IMR-90 (cell line): ENCODE measurements at regions of chr1 and their contacts with region 1.

Region 1: DNA sequence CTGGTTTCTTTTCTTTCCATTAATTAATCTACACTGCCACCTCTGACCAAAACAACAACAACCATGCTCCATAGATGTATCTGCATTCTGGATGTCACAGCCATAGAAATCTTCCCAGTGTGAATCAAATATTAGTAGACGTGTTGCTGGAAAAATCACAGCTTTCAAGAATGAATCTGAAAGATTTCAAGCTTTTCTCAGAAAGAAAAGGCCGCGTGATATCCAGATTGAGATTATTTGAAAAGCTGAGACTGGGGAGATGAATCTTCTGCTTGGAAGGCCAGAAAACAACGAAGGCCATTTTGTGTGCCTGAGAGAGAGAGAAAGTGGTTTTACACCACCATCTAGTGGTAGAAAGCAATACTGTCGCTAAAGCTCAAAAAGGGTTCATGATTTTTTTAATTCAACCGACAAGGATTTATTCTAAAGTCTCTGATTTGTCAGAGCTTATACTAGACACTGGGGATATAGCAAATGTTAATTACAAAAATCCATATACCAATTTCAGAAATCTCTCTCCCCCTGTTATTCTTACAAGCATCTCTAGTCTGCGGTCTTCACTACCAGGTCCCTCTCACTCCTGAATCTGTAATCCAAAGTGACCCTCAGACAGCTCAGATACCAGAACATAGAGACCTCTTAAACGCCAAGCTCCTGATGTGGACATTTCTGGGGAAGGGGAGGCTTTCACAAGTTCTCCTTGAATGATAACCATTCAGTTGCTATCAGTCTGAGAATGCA is 87.5 kb upstream of the SGIP1 start:
- DNase-seq: peak; percentile 76
- ATAC-seq: peak; percentile 73
- H3K4me3 ChIP-seq: no peak overlapping the region
- H3K27ac ChIP-seq: no peak overlapping the region
- H3K4me1 ChIP-seq: peaks cover 7% of the 10 kb centered on the region
- H3K27me3 ChIP-seq: no peaks in the 10 kb centered on the region
- CTCF ChIP-seq: peak; percentile 98
- POLR2A ChIP-seq: peak; percentile 59
- RAD21 ChIP-seq: peak; percentile 98

Region 2: GRCh38 chr1:65419681-65420589 is 1026.5 kb before region 1 on chr1:
- CTCF ChIA-PET with region 1: no interaction called
- POLR2A ChIA-PET with region 1: no interaction called
- dilution Hi-C with region 1: no loop called
- in situ Hi-C with region 1: loop called (anchors 10 kb)
- intact Hi-C with region 1: no loop called
- DNase-seq: peak; percentile 97
- ATAC-seq: peak; percentile 95
- H3K4me3 ChIP-seq: peak overlapping the region; percentile 67
- H3K27ac ChIP-seq: peak overlapping the region; percentile 78
- H3K4me1 ChIP-seq: peaks cover 12% of the 10 kb centered on the region
- H3K27me3 ChIP-seq: no peaks in the 10 kb centered on the region
- CTCF ChIP-seq: no peak
- POLR2A ChIP-seq: no peak
- RAD21 ChIP-seq: no peak

Region 3: GRCh38 chr1:65717815-65718454 is 728.5 kb before region 1 on chr1:
- CTCF ChIA-PET with region 1: no interaction called
- POLR2A ChIA-PET with region 1: no interaction called
- dilution Hi-C with region 1: no loop called
- in situ Hi-C with region 1: no loop called
- intact Hi-C with region 1: loop called (anchors 1 kb)
- DNase-seq: peak; percentile 66
- ATAC-seq: peak; percentile 81
- H3K4me3 ChIP-seq: no peak overlapping the region
- H3K27ac ChIP-seq: no peak overlapping the region
- H3K4me1 ChIP-seq: no peaks in the 10 kb centered on the region
- H3K27me3 ChIP-seq: no peaks in the 10 kb centered on the region; the same call in 1 of the 2 replicates
- CTCF ChIP-seq: peak; percentile 59
- POLR2A ChIP-seq: no peak
- RAD21 ChIP-seq: peak; percentile 78

Region 4: GRCh38 chr1:65958561-65959350 is 487.7 kb before region 1 on chr1:
- CTCF ChIA-PET with region 1: interaction called, 9 read pairs
- POLR2A ChIA-PET with region 1: no interaction called
- dilution Hi-C with region 1: no loop called
- in situ Hi-C with region 1: loop called (anchors 10 kb)
- intact Hi-C with region 1: loop called (anchors 1 kb)
- DNase-seq: peak; percentile 60
- ATAC-seq: peak; percentile 62; the same call in 1 of the 2 replicates
- H3K4me3 ChIP-seq: no peak overlapping the region
- H3K27ac ChIP-seq: no peak overlapping the region
- H3K4me1 ChIP-seq: no peaks in the 10 kb centered on the region
- H3K27me3 ChIP-seq: no peaks in the 10 kb centered on the region
- CTCF ChIP-seq: peak; percentile 84
- POLR2A ChIP-seq: no peak
- RAD21 ChIP-seq: peak; percentile 87

Region 5: GRCh38 chr1:66253330-66253921 is 193.0 kb before region 1 on chr1:
- CTCF ChIA-PET with region 1: interaction called, 28 read pairs
- POLR2A ChIA-PET with region 1: no interaction called
- dilution Hi-C with region 1: loop called (anchors 10 kb)
- in situ Hi-C with region 1: no loop called
- intact Hi-C with region 1: loop called (anchors 1 kb)
- DNase-seq: peak; percentile 85
- ATAC-seq: peak; percentile 96
- H3K4me3 ChIP-seq: no peak overlapping the region
- H3K27ac ChIP-seq: no peak overlapping the region
- H3K4me1 ChIP-seq: peaks cover 8% of the 10 kb centered on the region
- H3K27me3 ChIP-seq: no peaks in the 10 kb centered on the region
- CTCF ChIP-seq: peak; percentile 95
- POLR2A ChIP-seq: peak; percentile 45; the same call in 1 of the 2 replicates
- RAD21 ChIP-seq: peak; percentile 99

Region 6: GRCh38 chr1:66331657-66332547 is 114.5 kb before region 1 on chr1:
- CTCF ChIA-PET with region 1: interaction called, 4 read pairs
- POLR2A ChIA-PET with region 1: interaction called, 3 read pairs
- dilution Hi-C with region 1: no loop called
- in situ Hi-C with region 1: no loop called
- intact Hi-C with region 1: loop called (anchors 1 kb)
- DNase-seq: peak; percentile 85
- ATAC-seq: peak; percentile 77
- H3K4me3 ChIP-seq: peak overlapping the region; percentile 55
- H3K27ac ChIP-seq: peak overlapping the region; percentile 86
- H3K4me1 ChIP-seq: peaks cover 7% of the 10 kb centered on the region
- H3K27me3 ChIP-seq: no peaks in the 10 kb centered on the region
- CTCF ChIP-seq: peak; percentile 35
- POLR2A ChIP-seq: peak; percentile 24; the same call in 1 of the 2 replicates
- RAD21 ChIP-seq: peak; percentile 7; the same call in 1 of the 2 replicates

Region 7: DNA sequence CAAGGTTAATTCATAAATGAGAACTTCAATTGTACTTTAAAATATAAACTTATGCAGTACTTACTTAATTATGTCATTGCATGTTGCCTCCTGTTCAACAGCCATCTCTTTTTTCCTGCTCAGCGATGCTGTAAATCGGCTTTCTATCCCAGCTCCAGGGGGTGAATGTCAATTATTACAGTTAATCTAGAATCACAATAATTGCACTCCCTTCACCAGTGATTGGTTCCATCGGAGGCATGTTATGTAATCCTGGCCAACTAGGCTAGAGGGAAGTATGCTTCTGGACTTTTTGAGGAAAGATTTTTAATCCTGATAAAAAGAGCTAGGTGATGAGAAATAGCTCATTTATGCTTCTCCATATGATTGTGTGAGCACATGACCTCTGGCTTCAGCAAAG is 33.7 kb after region 1 on chr1:
- CTCF ChIA-PET with region 1: no interaction called
- POLR2A ChIA-PET with region 1: no interaction called
- dilution Hi-C with region 1: no loop called
- in situ Hi-C with region 1: no loop called
- intact Hi-C with region 1: no loop called
- DNase-seq: no peak
- ATAC-seq: no peak
- H3K4me3 ChIP-seq: no peak overlapping the region
- H3K27ac ChIP-seq: no peak overlapping the region
- H3K4me1 ChIP-seq: peaks cover 2% of the 10 kb centered on the region; the same call in 1 of the 2 replicates
- H3K27me3 ChIP-seq: no peaks in the 10 kb centered on the region
- CTCF ChIP-seq: no peak
- POLR2A ChIP-seq: no peak
- RAD21 ChIP-seq: no peak

Region 8: DNA sequence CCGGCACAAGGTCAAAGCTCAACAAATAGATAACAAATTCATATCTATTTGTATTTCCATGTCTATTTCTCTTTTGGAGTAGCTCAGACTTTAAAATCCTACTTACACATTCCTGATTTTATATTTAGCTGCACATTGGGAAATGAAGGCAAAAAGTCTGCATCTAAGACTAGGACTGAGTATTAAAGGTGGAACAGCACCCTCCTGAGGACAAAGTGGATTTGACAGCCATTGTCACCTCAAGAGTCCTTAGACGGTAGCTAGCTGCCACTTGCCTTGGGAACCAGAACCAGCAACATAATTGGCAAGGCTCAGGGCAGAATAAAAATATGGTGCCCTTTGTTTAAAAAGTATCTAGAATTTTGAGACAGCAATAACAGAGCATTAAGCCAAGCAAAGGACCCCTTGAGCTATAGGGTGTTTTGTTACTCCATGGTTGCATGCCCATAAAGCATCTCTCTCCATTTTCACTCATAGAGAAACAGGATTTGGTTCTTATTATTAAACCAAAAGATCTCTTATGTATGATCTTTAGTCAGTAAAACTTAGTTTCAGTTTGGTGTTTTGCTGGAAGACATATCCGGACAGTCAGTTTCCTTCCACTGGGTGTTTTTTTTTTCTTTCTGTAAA is 57.5 kb after region 1 on chr1:
- CTCF ChIA-PET with region 1: interaction called, 42 read pairs
- POLR2A ChIA-PET with region 1: no interaction called
- dilution Hi-C with region 1: no loop called
- in situ Hi-C with region 1: no loop called
- intact Hi-C with region 1: loop called (anchors 1 kb)
- DNase-seq: peak; percentile 81
- ATAC-seq: peak; percentile 87
- H3K4me3 ChIP-seq: no peak overlapping the region
- H3K27ac ChIP-seq: no peak overlapping the region
- H3K4me1 ChIP-seq: 0 out of 2 replicates have a peak, but pooled peaks cover 2% of the 10 kb centered on the region
- H3K27me3 ChIP-seq: no peaks in the 10 kb centered on the region
- CTCF ChIP-seq: peak; percentile 70
- POLR2A ChIP-seq: no peak
- RAD21 ChIP-seq: peak; percentile 86